ENCODE measurements at regions of chr12 and their contacts with region 1.

Region 1: GRCh38 chr12:53675651-53676453 is at the start of gene ATP5MC2:
- H3K4me3 ChIP-seq: peak within 1 kb of the TSS; percentile 68
- H3K27ac ChIP-seq: peak within 1 kb of the TSS; percentile 90
- H3K4me1 ChIP-seq: 0 out of 2 replicates have a peak, but pooled peaks cover 7% of the 10 kb centered on the region
- CTCF ChIP-seq: peak; percentile 100

Region 2: DNA sequence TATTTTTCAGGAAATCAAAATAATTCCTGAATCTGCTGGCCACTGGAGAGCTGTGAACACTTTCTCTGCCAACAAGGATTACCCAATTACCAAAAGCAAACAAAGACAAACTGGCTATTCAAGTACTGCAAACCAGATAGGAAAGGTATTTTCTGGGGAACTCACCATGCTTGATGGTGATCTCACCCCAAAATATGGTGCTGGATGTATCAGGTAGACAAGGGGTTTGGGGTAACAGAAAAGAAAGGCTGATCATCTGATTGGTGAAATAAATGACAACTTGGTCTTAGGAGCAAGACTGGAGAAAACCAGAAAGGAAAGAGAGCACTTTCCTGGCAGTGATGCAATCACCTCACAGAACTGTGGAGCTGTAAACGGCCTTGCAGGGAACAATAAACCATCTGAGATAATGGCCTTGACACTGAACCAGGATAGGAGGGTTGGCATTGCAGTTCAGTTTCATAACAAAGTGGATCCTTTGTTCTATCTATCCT is 137.6 kb before region 1 on chr12:
- CTCF ChIA-PET with region 1: interaction called, 50 read pairs
- POLR2A ChIA-PET with region 1: interaction called, 11 read pairs
- H3K4me3 ChIP-seq: no peak overlapping the region
- H3K27ac ChIP-seq: peak overlapping the region; percentile 0; the same call in 1 of the 2 replicates
- H3K4me1 ChIP-seq: peaks cover 3% of the 10 kb centered on the region; the same call in 1 of the 2 replicates
- CTCF ChIP-seq: no peak

Region 3: GRCh38 chr12:53543539-53543938 is 132.3 kb before region 1 on chr12:
- CTCF ChIA-PET with region 1: interaction called, 50 read pairs
- POLR2A ChIA-PET with region 1: interaction called, 11 read pairs
- H3K4me3 ChIP-seq: no peak overlapping the region
- H3K27ac ChIP-seq: no peak overlapping the region; the same call in 1 of the 2 replicates
- H3K4me1 ChIP-seq: peaks cover 9% of the 10 kb centered on the region
- CTCF ChIP-seq: peak; percentile 88

Region 4: GRCh38 chr12:53625946-53626701 is 49.7 kb before region 1 on chr12 and contains the start of gene ATF7:
- CTCF ChIA-PET with region 1: interaction called, 8 read pairs
- POLR2A ChIA-PET with region 1: interaction called, 11 read pairs
- H3K4me3 ChIP-seq: peak within 1 kb of the TSS; percentile 83
- H3K27ac ChIP-seq: peak within 1 kb of the TSS; percentile 88
- H3K4me1 ChIP-seq: peaks cover 13% of the 10 kb centered on the region; the same call in 1 of the 2 replicates
- CTCF ChIP-seq: 0 out of 2 replicates have a peak, but pooled peaks have one; percentile 13

Region 5: GRCh38 chr12:53659011-53659551 is 16.8 kb before region 1 on chr12:
- CTCF ChIA-PET with region 1: interaction called, 8 read pairs
- POLR2A ChIA-PET with region 1: interaction called, 10 read pairs
- H3K4me3 ChIP-seq: no peak overlapping the region
- H3K27ac ChIP-seq: peak overlapping the region; percentile 92
- H3K4me1 ChIP-seq: peaks cover 20% of the 10 kb centered on the region
- CTCF ChIP-seq: no peak

Region 6: GRCh38 chr12:53712059-53712643 is 36.3 kb after region 1 on chr12:
- CTCF ChIA-PET with region 1: no interaction called
- POLR2A ChIA-PET with region 1: no interaction called
- H3K4me3 ChIP-seq: no peak overlapping the region
- H3K27ac ChIP-seq: no peak overlapping the region
- H3K4me1 ChIP-seq: peaks cover 14% of the 10 kb centered on the region
- CTCF ChIP-seq: no peak

Region 7: GRCh38 chr12:53766881-53767280 is 91.0 kb after region 1 on chr12:
- CTCF ChIA-PET with region 1: no interaction called
- POLR2A ChIA-PET with region 1: no interaction called
- H3K4me3 ChIP-seq: no peak overlapping the region
- H3K27ac ChIP-seq: no peak overlapping the region
- H3K4me1 ChIP-seq: peaks cover 3% of the 10 kb centered on the region
- CTCF ChIP-seq: no peak